ENCODE measurements at regions of chr3 and their contacts with region 1.

Region 1: DNA sequence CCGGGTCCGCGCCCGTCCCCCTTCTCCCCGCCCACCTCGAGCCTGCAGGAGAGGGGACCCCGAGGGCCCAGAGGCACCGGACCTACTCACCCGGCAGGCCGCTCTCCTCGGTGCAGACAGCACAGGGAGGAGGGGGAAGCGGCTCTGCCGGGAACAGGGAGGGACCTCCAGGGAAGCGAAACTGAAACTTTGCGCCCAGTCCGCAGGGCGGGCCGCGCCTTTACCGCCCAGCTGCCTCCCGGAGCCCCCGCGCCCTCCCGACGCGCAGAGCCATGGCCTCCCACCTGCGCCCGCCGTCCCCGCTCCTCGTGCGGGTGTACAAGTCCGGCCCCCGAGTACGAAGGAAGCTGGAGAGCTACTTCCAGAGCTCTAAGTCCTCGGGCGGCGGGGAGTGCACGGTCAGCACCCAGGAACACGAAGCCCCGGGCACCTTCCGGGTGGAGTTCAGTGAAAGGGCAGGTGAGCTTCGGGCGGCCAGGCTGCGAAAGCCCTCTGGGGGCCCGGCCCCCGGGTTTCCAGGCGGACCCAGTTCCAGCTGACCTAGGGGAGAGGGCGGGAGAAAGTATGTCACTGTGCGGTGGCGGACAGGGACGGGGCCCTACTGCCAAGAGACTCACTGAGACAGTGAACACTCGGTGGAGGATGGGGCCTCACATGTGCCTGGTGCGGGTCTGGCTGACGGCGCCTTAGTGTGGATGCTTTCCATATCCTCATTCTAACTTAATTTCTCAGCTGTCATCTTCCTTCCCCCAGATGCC is at the starts of genes DTX3L and PARP9:
- DNase-seq: peak; percentile 91
- H3K4me3 Mint-ChIP-seq: peak within 1 kb of the TSS; percentile 98
- H3K27ac Mint-ChIP-seq: peak within 1 kb of the TSS; percentile 98
- H3K4me1 Mint-ChIP-seq: peaks cover 74% of the 10 kb centered on the region
- H3K27me3 Mint-ChIP-seq: no peaks in the 10 kb centered on the region
- total RNA-seq, gene DTX3L: 135 to 144 TPM
- total RNA-seq, gene PARP9: 151 to 157 TPM

Region 2: GRCh38 chr3:122621112-122621511 is 56.8 kb after region 1 on chr3:
- CTCF ChIA-PET with region 1: no interaction called
- POLR2A ChIA-PET with region 1: no interaction called
- DNase-seq: no peak
- H3K4me3 Mint-ChIP-seq: no peak overlapping the region
- H3K27ac Mint-ChIP-seq: no peak overlapping the region
- H3K4me1 Mint-ChIP-seq: peaks cover 3% of the 10 kb centered on the region
- H3K27me3 Mint-ChIP-seq: no peaks in the 10 kb centered on the region

Region 3: GRCh38 chr3:122688996-122689395 is 124.7 kb after region 1 on chr3:
- CTCF ChIA-PET with region 1: interaction called, 8 read pairs
- POLR2A ChIA-PET with region 1: interaction called, 10 read pairs
- DNase-seq: no peak
- H3K4me3 Mint-ChIP-seq: no peak overlapping the region
- H3K27ac Mint-ChIP-seq: no peak overlapping the region
- H3K4me1 Mint-ChIP-seq: peaks cover 32% of the 10 kb centered on the region
- H3K27me3 Mint-ChIP-seq: no peaks in the 10 kb centered on the region